ENCODE measurements at regions of chr10 and their contacts with region 1.

Region 1: DNA sequence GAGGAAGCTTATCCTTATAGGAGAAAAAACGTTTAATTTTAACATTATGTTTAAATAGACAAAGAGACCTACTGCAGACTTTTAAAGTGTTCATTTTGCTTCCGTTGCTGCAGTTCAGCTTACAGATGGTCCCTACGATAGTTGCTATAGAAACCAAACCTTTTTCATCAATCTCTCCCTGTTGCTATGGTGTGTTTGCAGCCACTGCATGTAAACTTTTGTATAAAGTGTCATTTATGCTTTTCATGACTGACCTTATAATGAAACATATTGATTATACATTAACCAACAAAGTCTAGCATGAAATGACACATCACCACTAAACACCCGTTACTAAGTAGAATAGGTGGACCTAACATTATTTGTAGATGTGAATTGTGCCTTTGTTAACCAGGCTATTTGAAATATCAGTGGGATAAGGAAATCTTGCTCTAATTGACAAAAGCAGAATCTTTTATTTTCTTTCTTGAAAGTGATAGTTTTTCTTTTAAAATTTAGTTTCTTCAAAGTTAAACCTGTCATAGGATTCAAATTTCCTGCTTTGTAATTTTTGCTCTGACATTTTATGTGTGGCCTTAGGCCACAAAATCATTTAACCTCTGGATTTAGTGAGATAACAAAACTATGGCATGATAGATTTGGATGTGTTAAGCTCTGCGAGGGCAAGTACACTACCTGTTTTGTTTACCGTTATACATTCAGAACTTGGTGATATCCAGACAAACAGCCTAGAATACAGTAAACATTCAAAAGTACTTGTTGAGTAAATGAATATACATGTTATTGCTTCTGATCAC is 64.0 kb downstream of the CACNB2 start:
- DNase-seq: no peak
- H3K4me3 ChIP-seq: peak overlapping the region in 2 of 4 donors; percentile 20 to 29
- H3K27ac ChIP-seq: peak overlapping the region; percentile 75 to 88 (median 82)
- H3K4me1 ChIP-seq: peaks cover 0 to 52% (median 37%) of the 10 kb centered on the region in 4 donors
- H3K27me3 ChIP-seq: no peaks in the 10 kb centered on the region
- CTCF ChIP-seq: no peak
- EP300 ChIP-seq: no peak
- POLR2A ChIP-seq: no peak

Region 2: DNA sequence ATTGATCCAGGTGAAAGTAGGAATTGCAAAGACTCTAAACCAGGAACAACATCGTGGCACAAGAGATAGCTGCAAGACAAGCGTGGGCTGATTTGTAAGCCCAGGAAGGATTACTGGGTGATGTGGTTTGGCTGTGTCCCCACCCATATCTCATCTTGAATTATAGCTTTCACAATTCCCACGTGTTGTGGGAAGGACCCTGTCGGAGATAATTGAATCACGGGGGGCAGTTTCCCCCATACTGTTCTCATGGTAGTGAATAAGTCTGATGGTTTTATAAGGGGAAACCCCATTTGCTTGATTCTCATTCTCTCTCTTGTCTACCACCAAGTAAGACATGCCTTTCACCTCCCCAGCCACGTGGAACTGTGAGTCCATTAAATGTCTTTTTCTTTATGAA is 809.4 kb before region 1 on chr10:
- intact Hi-C with region 1: no loop called
- DNase-seq: no peak
- H3K4me3 ChIP-seq: no peak overlapping the region
- H3K27ac ChIP-seq: no peak overlapping the region
- H3K4me1 ChIP-seq: no peaks in the 10 kb centered on the region
- H3K27me3 ChIP-seq: no peaks in the 10 kb centered on the region
- CTCF ChIP-seq: no peak
- EP300 ChIP-seq: no peak
- POLR2A ChIP-seq: no peak

Region 3: GRCh38 chr10:17918187-17918903 is 285.9 kb before region 1 on chr10:
- intact Hi-C with region 1: loop called (anchors 5 kb)
- DNase-seq: no peak
- H3K4me3 ChIP-seq: no peak overlapping the region
- H3K27ac ChIP-seq: peak overlapping the region in 1 of 4 donors; percentile 14
- H3K4me1 ChIP-seq: peaks cover 0 to 39% (median 17%) of the 10 kb centered on the region in 4 donors
- H3K27me3 ChIP-seq: no peaks in the 10 kb centered on the region
- CTCF ChIP-seq: no peak
- EP300 ChIP-seq: no peak
- POLR2A ChIP-seq: no peak

Region 4: GRCh38 chr10:18149196-18149800 is 54.9 kb before region 1 on chr10:
- intact Hi-C with region 1: no loop called
- DNase-seq: no peak
- H3K4me3 ChIP-seq: no peak overlapping the region
- H3K27ac ChIP-seq: peak overlapping the region; percentile 62 to 97 (median 94)
- H3K4me1 ChIP-seq: peaks cover 0 to 78% (median 63%) of the 10 kb centered on the region in 4 donors
- H3K27me3 ChIP-seq: no peaks in the 10 kb centered on the region
- CTCF ChIP-seq: no peak
- EP300 ChIP-seq: no peak
- POLR2A ChIP-seq: no peak

Region 5: DNA sequence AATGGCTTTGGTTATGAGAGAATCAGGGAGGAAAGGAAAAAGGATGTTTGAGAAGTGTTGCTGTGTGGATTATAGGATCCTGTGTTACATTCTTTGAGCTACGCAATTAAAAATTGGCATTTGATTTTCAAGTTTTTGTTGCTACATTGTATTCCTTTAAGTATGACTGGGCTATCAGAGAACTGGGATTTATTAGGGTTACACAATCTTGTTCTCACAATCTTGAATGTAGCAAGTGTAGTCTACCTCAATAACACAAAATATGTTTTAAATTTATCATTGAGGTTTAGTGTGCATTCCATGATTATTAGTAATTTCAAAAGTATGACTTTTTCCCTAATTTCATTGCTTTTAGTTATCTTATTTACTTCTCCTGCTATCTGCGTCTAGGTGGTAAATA is 49.8 kb after region 1 on chr10:
- intact Hi-C with region 1: no loop called
- DNase-seq: no peak
- H3K4me3 ChIP-seq: no peak overlapping the region
- H3K27ac ChIP-seq: no peak overlapping the region
- H3K4me1 ChIP-seq: peaks cover 0 to 18% (median 9%) of the 10 kb centered on the region in 4 donors
- H3K27me3 ChIP-seq: no peaks in the 10 kb centered on the region
- CTCF ChIP-seq: no peak
- EP300 ChIP-seq: no peak
- POLR2A ChIP-seq: no peak

Measured in sigmoid colon (tissue), 7 donors.